ENCODE measurements at regions of chr21 and their contacts with region 1.

Region 1: GRCh38 chr21:45098867-45099266 is 24.5 kb downstream of the ADARB1 start:
- DNase-seq: no peak
- H3K4me3 Mint-ChIP-seq: no peak overlapping the region
- H3K27ac Mint-ChIP-seq: no peak overlapping the region
- H3K4me1 Mint-ChIP-seq: peaks cover 35% of the 10 kb centered on the region
- H3K27me3 Mint-ChIP-seq: no peaks in the 10 kb centered on the region

Region 2: GRCh38 chr21:45064618-45065399 is 34.1 kb before region 1 on chr21:
- intact Hi-C with region 1: no loop called
- DNase-seq: no peak
- H3K4me3 Mint-ChIP-seq: no peak overlapping the region
- H3K27ac Mint-ChIP-seq: no peak overlapping the region
- H3K4me1 Mint-ChIP-seq: no peaks in the 10 kb centered on the region
- H3K27me3 Mint-ChIP-seq: peaks cover 23% of the 10 kb centered on the region

Region 3: GRCh38 chr21:45129189-45129923 is 30.5 kb after region 1 on chr21:
- intact Hi-C with region 1: loop called (anchors 1 kb)
- DNase-seq: no peak
- H3K4me3 Mint-ChIP-seq: no peak overlapping the region
- H3K27ac Mint-ChIP-seq: no peak overlapping the region
- H3K4me1 Mint-ChIP-seq: peaks cover 10% of the 10 kb centered on the region
- H3K27me3 Mint-ChIP-seq: no peaks in the 10 kb centered on the region

Measured in activated T-helper 1 cell treated with anti-CD3 and anti-CD28 coated beads, Interleukin-12 subunit alpha, Interleukin-12 subunit beta, Interleukin-2, Interleukin-4 antibody, amounts not matched to agents 30 ng/mL and 10 ng/mL and 1 ng/mL, durations not matched to agents 14 hours and 24 hours and 36 hours (primary cell).